AG04449 (cell line): ENCODE measurements at regions of chr2 and their contacts with region 1.

Region 1: DNA sequence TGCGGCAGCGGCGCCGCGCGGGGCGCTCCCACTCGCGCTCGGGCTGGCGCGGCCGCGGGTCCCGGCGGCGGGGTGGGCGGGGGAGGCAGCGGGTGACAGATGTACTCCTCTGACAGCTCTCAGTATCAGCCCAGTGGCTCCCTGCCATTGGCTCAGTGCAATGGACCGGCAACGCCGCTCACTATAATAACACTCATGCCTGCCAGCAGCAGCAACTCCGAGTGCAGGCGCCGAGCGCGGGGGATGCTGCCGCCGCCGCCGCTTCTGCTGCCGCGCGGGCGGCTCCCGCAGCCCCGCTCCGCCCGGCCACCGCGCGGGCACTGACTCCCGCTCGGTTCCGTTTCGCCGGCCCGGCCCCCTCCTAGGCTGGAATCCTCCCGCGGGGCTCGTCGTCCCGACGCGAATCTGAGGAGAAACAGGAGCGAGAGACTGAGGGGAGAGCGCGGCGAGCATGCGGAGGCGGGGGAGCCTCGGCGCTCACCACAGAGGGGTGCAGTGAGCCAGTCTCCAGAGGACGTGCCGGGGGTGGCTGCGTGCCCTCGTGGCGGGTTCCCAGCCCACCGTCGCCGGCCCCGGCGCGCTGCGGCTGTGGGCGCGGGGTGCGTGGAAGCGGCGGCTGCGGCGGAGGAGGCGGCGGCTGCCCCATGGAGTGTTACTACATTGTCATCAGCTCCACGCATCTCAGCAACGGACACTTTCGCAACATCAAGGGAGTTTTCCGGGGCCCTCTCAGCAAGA is at the start of gene ZNF804A:
- DNase-seq: no peak
- H3K4me3 ChIP-seq: peak within 1 kb of the TSS; percentile 68
- CTCF ChIP-seq: no peak

Region 2: DNA sequence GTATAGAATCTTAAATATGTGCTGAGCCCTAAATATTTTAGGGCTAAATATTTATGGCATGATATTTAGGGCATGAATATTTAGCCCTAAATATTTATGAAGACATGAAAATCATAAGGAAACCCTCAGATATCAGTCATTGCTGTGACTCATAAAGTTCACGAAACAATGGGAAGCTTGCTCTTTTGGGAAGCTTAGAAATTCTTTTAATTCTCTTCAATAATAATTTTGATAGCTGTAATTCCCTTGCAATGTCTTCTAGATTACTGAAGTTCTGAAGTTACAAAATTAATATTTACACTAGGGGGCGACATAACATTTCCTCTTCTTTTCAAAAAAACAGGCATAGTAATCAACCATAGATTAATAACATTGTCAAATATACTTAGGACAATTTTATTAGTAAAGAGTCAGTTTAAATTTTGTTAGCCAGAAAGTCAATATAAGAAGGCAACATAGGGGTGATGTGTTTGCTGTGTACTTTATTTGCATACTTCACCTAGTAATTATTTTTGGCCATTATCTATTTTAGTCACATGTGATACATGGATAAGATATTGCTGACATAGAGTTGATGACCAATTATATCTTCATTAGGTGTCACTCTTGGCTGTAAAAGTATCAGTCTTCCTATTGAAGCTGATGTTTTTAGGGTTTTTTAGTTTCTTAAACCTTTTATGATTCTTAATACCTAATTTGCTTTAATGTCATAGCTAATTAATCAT is 13.0 kb after region 1 on chr2:
- CTCF ChIA-PET with region 1: interaction called, 26 read pairs
- POLR2A ChIA-PET with region 1: interaction called, 3 read pairs
- DNase-seq: no peak
- H3K4me3 ChIP-seq: no peak overlapping the region
- CTCF ChIP-seq: no peak

Region 3: GRCh38 chr2:184628051-184628450 is 29.6 kb after region 1 on chr2:
- CTCF ChIA-PET with region 1: no interaction called
- POLR2A ChIA-PET with region 1: no interaction called
- DNase-seq: no peak
- H3K4me3 ChIP-seq: no peak overlapping the region
- CTCF ChIP-seq: no peak